HCT116 (cell line): ENCODE measurements at regions of chr12 and their contacts with region 1.

Region 1: GRCh38 chr12:52023182-52023975 is 16.6 kb downstream of the TAMALIN start:
- DNase-seq: peak; percentile 62
- ATAC-seq: peak; percentile 71
- H3K4me3 ChIP-seq: peak overlapping the region; percentile 47 to 62
- H3K27ac ChIP-seq: peak overlapping the region; percentile 77
- H3K4me1 ChIP-seq: peaks cover 22 to 61% of the 10 kb centered on the region in 2 experiments
- H3K27me3 ChIP-seq: no peaks in the 10 kb centered on the region
- CTCF ChIP-seq: peak in 2 of 3 experiments; percentile 90; a peak in 4 of 6 replicates
- POLR2A ChIP-seq: no peak
- RAD21 ChIP-seq: no peak

Region 2: DNA sequence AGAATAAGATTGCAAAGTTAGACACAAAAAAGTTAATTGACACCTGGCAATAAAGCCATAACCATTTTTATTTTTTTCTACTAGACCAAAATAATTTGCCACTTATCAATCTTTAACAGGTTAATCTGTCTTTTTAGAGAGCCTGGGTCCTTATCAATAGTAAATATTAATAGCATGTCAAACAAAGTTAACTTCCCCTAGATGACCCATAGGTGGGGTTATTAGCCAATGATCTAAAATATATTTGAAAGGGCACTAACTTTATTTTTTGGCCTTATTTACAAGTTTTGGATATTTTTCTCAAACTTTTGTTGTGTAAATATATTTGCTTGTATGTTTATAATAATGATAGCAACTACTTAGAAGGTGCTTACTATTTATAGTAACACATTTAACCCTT is 131.5 kb before region 1 on chr12:
- CTCF ChIA-PET with region 1: interaction called, 36 read pairs
- POLR2A ChIA-PET with region 1: no interaction called
- RAD21 ChIA-PET with region 1: no interaction called
- intact Hi-C with region 1: loop called (anchors 5 kb)
- DNase-seq: no peak
- ATAC-seq: no peak
- H3K4me3 ChIP-seq: no peak overlapping the region
- H3K27ac ChIP-seq: no peak overlapping the region
- H3K4me1 ChIP-seq: peaks cover 0 to 8% of the 10 kb centered on the region in 2 experiments; a peak in 2 of 4 replicates
- H3K27me3 ChIP-seq: no peaks in the 10 kb centered on the region
- CTCF ChIP-seq: peak; percentile 32 to 53 (median 35); a peak in 5 of 6 replicates
- POLR2A ChIP-seq: no peak
- RAD21 ChIP-seq: peak; percentile 51

Region 3: GRCh38 chr12:52004042-52004648 is 19.2 kb before region 1 on chr12:
- CTCF ChIA-PET with region 1: interaction called, 137 read pairs
- POLR2A ChIA-PET with region 1: interaction called, 15 read pairs
- RAD21 ChIA-PET with region 1: interaction called, 5 to 21 read pairs
- intact Hi-C with region 1: loop called (anchors 1 kb)
- DNase-seq: no peak
- ATAC-seq: peak; percentile 83
- H3K4me3 ChIP-seq: no peak overlapping the region
- H3K27ac ChIP-seq: no peak overlapping the region
- H3K4me1 ChIP-seq: peaks cover 0 to 7% of the 10 kb centered on the region in 2 experiments; a peak in 2 of 4 replicates
- H3K27me3 ChIP-seq: no peaks in the 10 kb centered on the region
- CTCF ChIP-seq: peak; percentile 79 to 94 (median 82)
- POLR2A ChIP-seq: no peak
- RAD21 ChIP-seq: peak; percentile 94

Region 4: DNA sequence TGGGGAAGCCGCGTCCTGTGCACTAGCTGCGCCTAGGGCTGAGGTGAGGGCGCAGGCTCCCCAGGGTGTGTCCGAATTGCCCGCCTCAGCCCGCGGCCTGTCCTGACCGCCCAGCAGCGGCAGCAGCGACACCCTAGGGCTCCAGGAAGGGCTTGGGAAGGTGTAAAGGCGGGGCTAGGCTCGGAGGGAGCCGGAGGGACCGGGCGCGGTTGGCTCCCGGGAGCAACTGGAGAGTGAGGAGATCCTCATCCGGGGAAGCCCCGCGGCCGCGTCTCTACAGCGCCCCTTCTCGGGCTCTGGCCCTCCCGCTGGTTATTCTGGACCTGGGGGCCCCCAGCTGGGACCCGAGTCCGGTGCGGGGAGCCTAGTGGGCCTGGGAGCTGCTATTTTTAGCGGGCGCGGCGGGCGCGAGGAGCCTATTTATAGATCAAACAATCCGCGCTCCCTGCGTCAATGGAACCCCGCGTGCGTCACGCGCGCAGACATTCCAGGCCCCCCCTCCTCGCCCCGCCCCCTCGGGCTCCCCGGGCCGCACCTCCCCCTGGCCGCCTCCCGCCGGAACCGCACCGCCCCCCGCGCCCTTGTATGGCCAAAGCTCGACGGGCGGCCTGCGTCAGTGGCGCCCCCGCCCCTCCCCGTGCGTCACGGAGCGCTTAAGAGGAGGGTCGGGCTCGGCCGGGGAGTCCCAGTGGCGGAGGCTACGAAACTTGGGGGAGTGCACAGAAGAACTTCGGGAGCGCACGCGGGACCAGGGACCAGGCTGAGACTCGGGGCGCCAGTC is 27.6 kb after region 1 on chr12 and contains the start of gene NR4A1:
- CTCF ChIA-PET with region 1: interaction called, 25 read pairs
- POLR2A ChIA-PET with region 1: interaction called, 17 read pairs
- RAD21 ChIA-PET with region 1: no interaction called
- intact Hi-C with region 1: no loop called
- DNase-seq: peak; percentile 87
- ATAC-seq: peak; percentile 82
- H3K4me3 ChIP-seq: peak within 1 kb of the TSS; percentile 62 to 86
- H3K27ac ChIP-seq: peak within 1 kb of the TSS; percentile 92
- H3K4me1 ChIP-seq: peaks cover 22 to 48% of the 10 kb centered on the region in 2 experiments
- H3K27me3 ChIP-seq: no peaks in the 10 kb centered on the region
- CTCF ChIP-seq: 0 out of 6 replicates have a peak, but pooled peaks of 1 of the 3 experiments have one; percentile 11
- POLR2A ChIP-seq: peak; percentile 63
- RAD21 ChIP-seq: no peak
- total RNA-seq, gene NR4A1: 35.3 TPM

Region 5: GRCh38 chr12:52069327-52070184 is 46.2 kb after region 1 on chr12 and contains the start of gene ATG101:
- CTCF ChIA-PET with region 1: interaction called, 70 read pairs
- POLR2A ChIA-PET with region 1: interaction called, 18 read pairs
- RAD21 ChIA-PET with region 1: interaction called, 5 to 13 read pairs
- intact Hi-C with region 1: loop called (anchors 1 kb)
- DNase-seq: peak; percentile 94
- ATAC-seq: peak; percentile 95
- H3K4me3 ChIP-seq: peak within 1 kb of the TSS; percentile 91 to 99
- H3K27ac ChIP-seq: peak within 1 kb of the TSS; percentile 86
- H3K4me1 ChIP-seq: peaks cover 7 to 23% of the 10 kb centered on the region in 2 experiments
- H3K27me3 ChIP-seq: no peaks in the 10 kb centered on the region
- CTCF ChIP-seq: peak; percentile 68 to 78 (median 78)
- POLR2A ChIP-seq: no peak
- RAD21 ChIP-seq: no peak
- total RNA-seq, gene ATG101: 49.2 TPM

Region 6: DNA sequence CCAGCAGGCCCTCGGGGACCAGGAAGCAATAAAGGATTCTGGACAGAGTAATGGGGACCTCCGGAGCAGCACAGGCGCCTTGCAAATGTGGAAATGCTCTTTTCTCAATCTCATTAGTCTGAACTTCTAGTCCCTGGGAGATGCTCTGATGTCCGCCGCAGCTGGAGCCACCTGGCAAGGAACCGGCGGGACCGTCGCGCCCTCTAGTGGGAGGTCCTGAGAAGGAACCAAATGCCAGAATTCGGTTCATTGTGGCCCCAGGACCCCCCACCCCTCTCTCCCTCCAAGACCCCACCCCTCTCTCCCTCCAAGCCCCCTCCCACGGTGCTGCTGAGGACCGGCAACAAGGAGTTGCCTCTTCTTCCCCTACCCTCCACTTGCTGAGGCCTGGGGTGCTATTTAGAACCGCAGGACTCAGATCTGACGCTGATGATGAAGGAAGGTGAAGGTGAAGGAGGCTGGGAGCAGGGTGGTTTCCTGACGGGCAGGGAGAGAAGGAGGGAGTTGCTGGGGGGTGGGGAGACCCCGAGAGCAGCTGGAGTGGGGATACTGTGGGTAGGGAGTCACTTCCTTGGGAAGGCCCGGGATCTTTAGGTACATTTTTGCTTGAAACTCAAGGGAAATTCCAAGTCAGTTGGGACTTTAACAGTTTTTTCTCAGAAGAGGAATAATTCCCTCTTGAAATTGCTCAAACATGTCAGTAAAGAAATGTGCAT is 98.6 kb after region 1 on chr12:
- CTCF ChIA-PET with region 1: interaction called, 174 read pairs
- POLR2A ChIA-PET with region 1: interaction called, 8 read pairs
- RAD21 ChIA-PET with region 1: interaction called, 7 to 8 read pairs
- intact Hi-C with region 1: loop called (anchors 1 kb)
- DNase-seq: no peak
- ATAC-seq: peak; percentile 58
- H3K4me3 ChIP-seq: no peak overlapping the region
- H3K27ac ChIP-seq: no peak overlapping the region
- H3K4me1 ChIP-seq: peaks cover 0 to 18% of the 10 kb centered on the region in 2 experiments; a peak in 2 of 4 replicates
- H3K27me3 ChIP-seq: no peaks in the 10 kb centered on the region
- CTCF ChIP-seq: peak; percentile 70 to 83 (median 80)
- POLR2A ChIP-seq: no peak
- RAD21 ChIP-seq: peak; percentile 72